Activated CD8-positive, alpha-beta T cell treated with anti-CD3 and anti-CD28 coated beads, Interleukin-2, amount 10 ng/mL, durations not matched to agents 7 days and 5 days (primary cell): ENCODE measurements at regions of chr11 and their contacts with region 1.

Region 1: GRCh38 chr11:62169935-62170548 is 20.0 kb upstream of the SCGB1D1 start:
- DNase-seq: no peak
- ATAC-seq: no peak
- H3K4me3 Mint-ChIP-seq: no peak overlapping the region
- H3K27ac Mint-ChIP-seq: no peak overlapping the region
- H3K4me1 Mint-ChIP-seq: peaks cover 2% of the 10 kb centered on the region
- H3K27me3 Mint-ChIP-seq: peaks cover 31% of the 10 kb centered on the region

Region 2: DNA sequence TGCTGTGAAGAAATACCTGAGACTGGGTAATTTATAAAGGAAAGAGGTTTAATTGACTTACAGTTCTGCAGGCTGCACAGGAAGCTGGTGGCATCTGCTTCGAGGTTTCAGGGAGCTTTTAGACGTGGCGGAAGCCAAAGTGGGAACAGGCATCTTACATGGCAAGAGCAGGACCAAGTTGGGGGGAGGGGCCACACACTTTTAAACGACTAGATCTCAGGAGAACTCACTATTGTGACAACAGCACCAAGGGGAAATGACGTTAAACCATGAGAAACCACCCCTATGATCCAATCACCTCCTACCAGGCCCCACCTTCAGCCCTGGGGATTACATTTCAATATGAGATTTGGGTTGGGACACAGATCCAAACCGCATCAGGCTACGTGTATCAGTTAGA is 139.9 kb after region 1 on chr11:
- CTCF ChIA-PET with region 1: interaction called, 27 read pairs
- POLR2A ChIA-PET with region 1: no interaction called
- DNase-seq: no peak
- ATAC-seq: no peak
- H3K4me3 Mint-ChIP-seq: no peak overlapping the region
- H3K27ac Mint-ChIP-seq: no peak overlapping the region
- H3K4me1 Mint-ChIP-seq: peaks cover 15% of the 10 kb centered on the region
- H3K27me3 Mint-ChIP-seq: peaks cover 31% of the 10 kb centered on the region

Region 3: GRCh38 chr11:62394825-62395538 is 224.9 kb after region 1 on chr11:
- CTCF ChIA-PET with region 1: no interaction called
- POLR2A ChIA-PET with region 1: no interaction called
- DNase-seq: peak; percentile 73
- ATAC-seq: peak; percentile 82
- H3K4me3 Mint-ChIP-seq: no peak overlapping the region
- H3K27ac Mint-ChIP-seq: no peak overlapping the region
- H3K4me1 Mint-ChIP-seq: peaks cover 33% of the 10 kb centered on the region
- H3K27me3 Mint-ChIP-seq: no peaks in the 10 kb centered on the region